ENCODE measurements at regions of chr6 and their contacts with region 1.

Region 1: DNA sequence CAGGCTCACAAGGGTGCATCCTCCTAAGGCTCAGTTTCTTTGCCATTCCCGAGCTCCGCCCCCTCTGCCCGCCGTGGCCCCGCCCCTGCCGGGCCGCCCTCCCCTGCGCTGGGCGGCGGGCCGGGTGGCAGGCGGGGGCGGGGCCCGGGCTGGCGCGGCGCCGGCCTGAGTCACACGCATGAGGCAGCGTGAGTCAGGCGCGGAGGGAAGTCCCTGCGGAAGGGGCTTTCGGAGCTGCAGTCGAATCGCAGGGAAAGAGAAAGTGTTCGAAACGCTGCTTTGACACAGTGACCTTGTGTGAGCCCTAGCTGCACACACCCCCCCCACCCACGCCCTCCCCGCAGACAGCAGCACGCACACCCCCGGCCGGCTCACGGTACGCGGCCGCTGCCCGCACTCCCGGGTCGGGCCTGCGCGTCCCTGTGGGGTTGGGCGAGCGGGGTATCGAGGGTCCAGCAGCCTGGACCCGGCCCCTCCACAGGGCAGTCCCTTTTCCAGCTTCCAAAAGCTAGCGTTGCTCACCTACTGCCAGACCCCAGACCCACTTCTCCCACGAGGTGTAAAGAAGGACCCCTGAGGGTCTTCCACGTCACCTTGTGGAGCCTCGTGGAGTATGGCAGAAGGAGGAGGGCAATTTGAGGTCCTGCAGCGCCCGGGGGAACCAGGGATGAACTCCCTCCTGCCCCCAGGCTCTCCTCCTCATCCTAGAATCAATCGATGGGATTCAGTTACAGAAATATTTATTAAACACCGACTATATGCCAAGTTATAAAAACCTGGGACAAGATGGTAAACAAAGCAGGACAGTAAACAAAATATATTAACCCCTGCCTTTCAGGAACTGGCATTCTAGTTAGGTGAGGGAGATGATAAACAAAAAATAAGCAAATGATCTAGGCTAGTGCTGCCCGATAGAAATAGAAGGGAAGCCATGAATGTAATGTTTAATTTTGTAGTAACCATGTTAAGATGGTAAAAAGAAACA is 12.4 kb upstream of the HMGA1 start:
- H3K4me3 ChIP-seq: peak overlapping the region; percentile 49
- H3K27ac ChIP-seq: peak overlapping the region; percentile 54; the same call in 1 of the 2 replicates
- H3K4me1 ChIP-seq: no peaks in the 10 kb centered on the region
- CTCF ChIP-seq: no peak

Region 2: GRCh38 chr6:34236131-34236996 is 12.1 kb after region 1 on chr6 and contains the start of gene HMGA1:
- CTCF ChIA-PET with region 1: interaction called, 3 read pairs
- POLR2A ChIA-PET with region 1: interaction called, 23 read pairs
- H3K4me3 ChIP-seq: peak within 1 kb of the TSS; percentile 67
- H3K27ac ChIP-seq: peak within 1 kb of the TSS; percentile 88
- H3K4me1 ChIP-seq: peaks cover 6% of the 10 kb centered on the region; the same call in 1 of the 2 replicates
- CTCF ChIP-seq: peak; percentile 32; the same call in 1 of the 2 replicates